Activated CD4-positive, alpha-beta memory T cell treated with anti-CD3 and anti-CD28 coated beads for 36 hours (primary cell): ENCODE measurements at regions of chr2 and their contacts with region 1.

Region 1: GRCh38 chr2:196453613-196454047 is 185.9 kb upstream of the CCDC150 start:
- DNase-seq: peak; percentile 45
- H3K4me3 Mint-ChIP-seq: no peak overlapping the region
- H3K27ac Mint-ChIP-seq: no peak overlapping the region
- H3K4me1 Mint-ChIP-seq: no peaks in the 10 kb centered on the region
- H3K27me3 Mint-ChIP-seq: peaks cover 12% of the 10 kb centered on the region

Region 2: GRCh38 chr2:196131384-196131937 is 322.2 kb before region 1 on chr2:
- CTCF ChIA-PET with region 1: interaction called, 6 read pairs
- POLR2A ChIA-PET with region 1: no interaction called
- intact Hi-C with region 1: loop called (anchors 2 kb)
- DNase-seq: peak; percentile 75
- H3K4me3 Mint-ChIP-seq: no peak overlapping the region
- H3K27ac Mint-ChIP-seq: peak overlapping the region; percentile 79
- H3K4me1 Mint-ChIP-seq: peaks cover 12% of the 10 kb centered on the region
- H3K27me3 Mint-ChIP-seq: no peaks in the 10 kb centered on the region

Region 3: DNA sequence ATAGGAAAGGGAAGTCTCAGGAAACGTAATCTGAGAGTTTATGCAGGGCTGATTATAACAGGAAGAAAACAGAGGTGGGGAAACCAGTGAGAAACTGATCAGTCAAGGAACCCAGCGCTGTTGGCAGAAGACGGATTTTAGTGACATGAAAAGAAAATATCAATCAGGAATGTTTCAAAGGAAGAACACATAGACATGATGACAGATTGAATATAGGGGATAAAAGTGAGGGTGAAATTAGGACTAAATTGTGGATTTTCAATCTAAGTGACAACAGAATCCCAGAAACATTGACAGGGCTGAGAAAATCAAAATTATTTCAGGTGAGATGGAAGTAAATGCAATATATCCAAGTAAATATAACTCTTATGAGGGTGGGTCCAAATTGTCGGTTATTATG is 13.9 kb before region 1 on chr2:
- CTCF ChIA-PET with region 1: interaction called, 10 read pairs
- POLR2A ChIA-PET with region 1: no interaction called
- intact Hi-C with region 1: no loop called
- DNase-seq: no peak
- H3K4me3 Mint-ChIP-seq: no peak overlapping the region
- H3K27ac Mint-ChIP-seq: no peak overlapping the region
- H3K4me1 Mint-ChIP-seq: no peaks in the 10 kb centered on the region
- H3K27me3 Mint-ChIP-seq: peaks cover 1% of the 10 kb centered on the region